ENCODE measurements at regions of chr1 and their contacts with region 1.

Region 1: GRCh38 chr1:222643938-222644635 is 26.2 kb downstream of the MIA3 start:
- DNase-seq: peak; percentile 85
- ATAC-seq: peak; percentile 97
- H3K4me3 ChIP-seq: peak overlapping the region; percentile 92
- H3K27ac ChIP-seq: peak overlapping the region; percentile 91
- H3K4me1 ChIP-seq: 0 out of 2 replicates have a peak, but pooled peaks cover 4% of the 10 kb centered on the region
- H3K27me3 ChIP-seq: no peaks in the 10 kb centered on the region
- CTCF ChIP-seq: no peak
- EP300 ChIP-seq: 0 out of 4 replicates have a peak, but pooled peaks of 1 of the 2 experiments have one; percentile 21
- POLR2A ChIP-seq: peak; percentile 78
- RAD21 ChIP-seq: no peak

Region 2: DNA sequence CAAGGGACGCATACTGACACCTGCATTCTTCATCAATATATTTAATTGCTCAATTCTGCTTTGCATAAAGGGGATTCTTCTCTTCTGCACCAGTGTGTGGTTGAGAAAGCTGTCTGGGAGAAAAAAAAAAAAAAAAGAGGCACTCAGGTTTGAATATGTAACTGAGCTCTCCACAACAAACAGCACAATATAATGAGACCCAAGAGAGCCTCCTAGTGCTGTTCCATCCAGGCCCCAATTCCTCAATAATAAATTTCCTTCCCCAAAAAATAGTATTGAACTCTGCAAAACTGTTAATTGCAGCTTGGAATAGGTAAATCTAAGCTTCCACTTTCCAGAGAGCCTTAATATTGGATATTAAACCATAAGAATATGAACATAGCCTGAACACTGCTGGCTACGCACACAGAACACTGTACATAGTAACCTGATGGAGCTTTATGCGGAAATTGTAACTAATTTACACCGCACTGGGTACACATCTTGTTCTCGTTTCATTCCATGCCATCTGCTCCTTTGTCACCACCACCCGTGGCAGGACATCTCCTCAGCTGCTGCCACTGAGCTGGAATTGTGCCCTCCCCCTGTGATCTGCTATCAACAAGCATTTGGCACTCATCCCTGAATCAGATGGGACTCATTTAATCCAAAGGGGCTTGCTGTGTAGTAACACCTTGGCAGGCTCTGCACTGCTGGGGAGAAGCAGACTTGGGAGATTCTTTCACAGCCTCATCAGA is 368.2 kb before region 1 on chr1:
- CTCF ChIA-PET with region 1: no interaction called
- POLR2A ChIA-PET with region 1: no interaction called
- RAD21 ChIA-PET with region 1: no interaction called
- SMC1A ChIA-PET with region 1: no interaction called
- in situ Hi-C with region 1: no loop called
- intact Hi-C with region 1: no loop called
- DNase-seq: no peak
- ATAC-seq: no peak
- H3K4me3 ChIP-seq: no peak overlapping the region
- H3K27ac ChIP-seq: no peak overlapping the region
- H3K4me1 ChIP-seq: no peaks in the 10 kb centered on the region
- H3K27me3 ChIP-seq: 0 out of 4 replicates have a peak, but pooled peaks cover 0 to 1% of the 10 kb centered on the region in 2 experiments
- CTCF ChIP-seq: no peak
- EP300 ChIP-seq: no peak
- POLR2A ChIP-seq: no peak
- RAD21 ChIP-seq: no peak

Region 3: DNA sequence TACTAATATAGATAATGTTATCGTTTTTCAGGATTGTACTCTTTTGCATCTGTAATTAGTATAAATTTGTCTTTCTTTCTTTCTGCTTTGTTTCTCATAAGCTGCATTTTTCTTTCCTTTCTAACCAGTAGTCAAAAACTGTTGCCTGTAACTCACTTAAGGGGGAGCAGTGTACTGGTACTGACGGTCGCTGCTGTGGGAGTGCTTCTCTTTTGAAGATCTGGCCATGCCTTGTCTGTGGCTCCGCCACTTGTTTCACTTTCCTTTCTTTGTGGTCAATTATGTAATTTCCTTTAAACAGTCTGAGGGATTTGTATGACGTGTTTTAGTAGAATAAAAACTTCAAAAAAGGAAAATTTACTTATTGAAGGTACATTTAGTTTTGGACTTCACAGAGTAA is 10.8 kb after region 1 on chr1:
- CTCF ChIA-PET with region 1: interaction called, 4 read pairs
- POLR2A ChIA-PET with region 1: interaction called, 6 read pairs
- RAD21 ChIA-PET with region 1: interaction called, 3 read pairs
- SMC1A ChIA-PET with region 1: interaction called, 23 read pairs
- in situ Hi-C with region 1: no loop called
- intact Hi-C with region 1: no loop called
- DNase-seq: peak; percentile 72
- ATAC-seq: peak; percentile 98
- H3K4me3 ChIP-seq: no peak overlapping the region
- H3K27ac ChIP-seq: no peak overlapping the region
- H3K4me1 ChIP-seq: peaks cover 30% of the 10 kb centered on the region
- H3K27me3 ChIP-seq: no peaks in the 10 kb centered on the region
- CTCF ChIP-seq: peak; percentile 24 to 38 (median 36); a peak in 5 of 6 replicates
- EP300 ChIP-seq: peak; percentile 42 to 56; a peak in 2 of 4 replicates
- POLR2A ChIP-seq: no peak
- RAD21 ChIP-seq: peak; percentile 49